Right ventricle myocardium superior (tissue), 1 donor: ENCODE measurements at regions of chr3 and their contacts with region 1.

Region 1: DNA sequence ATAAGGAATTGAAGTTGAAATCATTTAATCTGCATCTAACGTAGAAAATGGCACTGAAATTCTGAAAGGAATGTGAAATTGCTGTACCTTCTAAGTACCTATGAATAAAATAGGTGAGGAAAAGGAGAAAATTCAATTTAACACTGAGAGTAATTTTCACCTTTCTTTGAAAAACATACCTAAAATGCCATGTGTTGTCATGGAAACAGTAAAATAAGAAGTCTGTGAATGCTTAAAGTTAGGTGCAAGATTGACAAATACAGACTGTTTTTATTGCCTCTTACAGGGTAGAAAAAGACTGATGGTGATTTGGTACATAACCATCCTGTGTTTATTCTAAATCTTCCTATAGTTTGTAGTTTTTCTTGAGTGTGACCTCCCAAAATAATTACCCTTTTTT is 278.2 kb upstream of the STAC start:
- DNase-seq: no peak
- ATAC-seq: no peak

Region 2: DNA sequence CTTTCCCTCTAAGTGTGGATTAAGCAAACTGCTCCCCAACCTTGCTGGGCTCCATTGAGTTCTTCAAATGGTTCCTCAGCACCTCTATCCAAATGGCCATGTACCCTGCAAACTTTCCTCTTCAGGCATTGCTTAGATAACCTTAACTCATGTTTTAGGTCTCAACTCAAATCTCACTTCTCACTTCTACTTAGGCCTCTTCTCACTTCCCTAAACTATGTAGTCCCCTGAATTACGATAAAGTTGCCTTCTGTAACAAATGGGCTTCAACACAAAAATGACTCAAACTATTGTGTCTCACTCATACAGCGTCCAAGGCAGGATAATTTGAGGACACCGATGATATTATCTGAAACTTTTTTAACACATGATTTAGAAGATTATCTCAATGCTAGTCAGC is 215.8 kb after region 1 on chr3:
- intact Hi-C with region 1: loop called (anchors 10 kb)
- DNase-seq: no peak
- ATAC-seq: no peak

Region 3: DNA sequence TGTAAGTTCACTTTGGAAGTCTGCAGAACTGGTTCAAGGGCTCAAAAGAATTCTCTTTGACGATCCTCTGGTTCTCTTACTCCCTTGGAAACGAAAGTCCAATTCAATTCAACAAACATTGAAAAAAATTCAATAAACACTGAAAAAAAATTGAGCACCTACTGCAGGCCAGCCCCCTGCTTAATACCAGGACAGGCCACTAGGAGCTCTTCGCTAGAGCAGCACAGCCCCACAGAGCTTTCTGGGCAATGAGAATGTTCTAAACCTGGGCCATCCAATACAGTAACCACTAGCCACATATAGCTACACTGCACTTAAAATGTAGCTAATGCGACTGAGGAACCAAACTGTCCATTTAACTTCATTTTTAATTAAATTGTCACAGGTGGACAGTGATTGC is 712.7 kb after region 1 on chr3:
- intact Hi-C with region 1: no loop called
- DNase-seq: no peak
- ATAC-seq: no peak